Dorsolateral prefrontal cortex (tissue), 120 donors: ENCODE measurements at regions of chr10 and their contacts with region 1.

Region 1: DNA sequence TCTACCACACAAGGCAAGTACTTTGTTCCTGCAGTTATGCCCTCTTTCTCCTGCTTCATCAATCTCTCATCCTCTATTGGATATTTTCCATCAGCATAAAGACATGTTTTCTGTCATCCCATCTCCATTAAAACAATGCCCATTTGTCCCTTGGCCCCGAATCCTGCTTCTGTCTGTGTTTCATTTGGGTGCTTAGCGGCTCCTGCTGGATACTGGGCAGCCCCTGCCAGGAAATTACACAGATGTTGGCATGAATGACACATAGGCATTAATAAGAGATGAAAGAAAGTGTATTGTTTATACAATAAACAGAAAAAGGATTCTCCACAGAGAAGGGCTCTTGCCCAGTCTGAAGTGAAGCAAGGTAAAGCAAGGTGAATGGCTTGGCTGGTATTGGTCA is 765.3 kb downstream of the REEP3 start:
- DNase-seq: peak in 8 of 10 donors; percentile 32 to 79 (median 60)
- H3K4me3 ChIP-seq: no peak overlapping the region
- H3K27ac ChIP-seq: peak overlapping the region in 38 of 59 donors; percentile 5 to 72 (median 48)
- H3K27me3 ChIP-seq: no peaks in the 10 kb centered on the region
- CTCF ChIP-seq: peak in 48 of 56 donors; percentile 14 to 66 (median 40)

Region 2: GRCh38 chr10:64091897-64092296 is 194.6 kb before region 1 on chr10:
- intact Hi-C with region 1: loop called in 1 of 2 experiments (anchors 5 kb)
- DNase-seq: peak in 4 of 10 donors; percentile 10 to 49 (median 36)
- H3K4me3 ChIP-seq: no peak overlapping the region
- H3K27ac ChIP-seq: no peak overlapping the region
- H3K27me3 ChIP-seq: no peaks in the 10 kb centered on the region
- CTCF ChIP-seq: peak; percentile 18 to 79 (median 62)

Region 3: GRCh38 chr10:64109926-64110495 is 176.5 kb before region 1 on chr10:
- intact Hi-C with region 1: loop called (anchors 5 to 10 kb)
- DNase-seq: no peak
- H3K4me3 ChIP-seq: no peak overlapping the region
- H3K27ac ChIP-seq: peak overlapping the region in 10 of 59 donors; percentile 1 to 67 (median 52)
- H3K27me3 ChIP-seq: no peaks in the 10 kb centered on the region
- CTCF ChIP-seq: no peak

Region 4: GRCh38 chr10:64115913-64116643 is 170.5 kb before region 1 on chr10:
- intact Hi-C with region 1: loop called (anchors 5 to 10 kb)
- DNase-seq: peak in 2 of 10 donors; percentile 16 to 35
- H3K4me3 ChIP-seq: peak overlapping the region in 1 of 59 donors; percentile 19
- H3K27ac ChIP-seq: no peak overlapping the region
- H3K27me3 ChIP-seq: no peaks in the 10 kb centered on the region
- CTCF ChIP-seq: peak; percentile 23 to 72 (median 53)

Region 5: DNA sequence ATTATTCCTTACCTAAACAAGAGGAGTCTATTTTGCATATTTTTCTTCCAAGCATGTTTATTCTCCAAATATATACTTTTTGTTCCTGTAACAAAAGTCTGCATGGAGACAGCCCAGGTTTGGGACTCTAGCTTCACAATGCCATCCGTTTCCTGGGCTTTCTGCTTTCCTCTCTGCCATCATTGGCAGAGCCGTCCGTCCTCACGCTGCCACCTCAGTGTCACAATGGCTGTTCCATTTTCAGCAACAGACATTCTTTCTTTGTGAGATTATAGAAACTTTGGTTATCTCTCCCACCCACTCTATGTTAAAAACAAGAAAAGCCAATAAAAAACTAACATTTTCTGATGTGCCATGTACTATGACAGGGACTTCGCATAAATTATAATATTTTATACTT is 59.9 kb after region 1 on chr10:
- intact Hi-C with region 1: loop called (anchors 5 to 10 kb)
- DNase-seq: peak in 3 of 10 donors; percentile 5 to 43 (median 24)
- H3K4me3 ChIP-seq: peak overlapping the region in 33 of 59 donors; percentile 0 to 39 (median 18)
- H3K27ac ChIP-seq: peak overlapping the region in 48 of 59 donors; percentile 1 to 84 (median 46)
- H3K27me3 ChIP-seq: no peaks in the 10 kb centered on the region
- CTCF ChIP-seq: peak in 2 of 56 donors; percentile 8 to 11